HCT116 (cell line): ENCODE measurements at regions of chr6 and their contacts with region 1.

Region 1: DNA sequence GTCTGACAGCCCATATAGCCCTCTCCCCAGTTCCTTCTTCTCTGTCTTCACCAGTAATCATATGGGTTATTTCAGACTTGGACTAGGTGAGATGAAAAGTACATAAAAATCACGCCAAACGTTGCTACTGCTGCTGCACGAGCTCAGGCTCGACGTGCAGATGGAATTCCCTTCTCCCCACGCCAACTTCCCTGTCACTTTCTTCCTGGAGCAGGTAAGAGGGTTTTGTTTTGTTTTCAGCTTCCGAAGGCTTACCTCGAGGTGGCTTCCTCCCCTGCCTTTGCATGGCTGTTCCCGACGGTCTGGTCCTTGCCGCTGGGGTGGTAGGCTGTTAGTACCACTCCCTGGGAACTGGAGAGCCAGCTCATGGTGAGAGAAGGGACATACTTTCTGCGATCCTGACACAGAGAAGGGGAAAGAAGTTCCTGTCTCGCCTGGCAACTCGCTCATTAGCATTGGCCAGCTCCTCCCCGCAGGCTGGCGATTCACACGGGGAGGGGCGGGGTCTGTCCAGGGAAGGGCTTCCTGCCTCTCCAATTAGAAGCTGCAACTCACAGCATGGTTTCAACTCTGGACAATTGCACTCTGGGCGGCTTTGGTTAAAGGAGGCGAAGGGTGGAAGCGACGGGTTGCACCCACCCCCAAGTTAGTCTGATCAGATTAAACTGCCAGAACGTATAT is at the start of gene ARHGAP18:
- DNase-seq: peak; percentile 86
- ATAC-seq: peak; percentile 97
- H3K4me3 ChIP-seq: peak within 1 kb of the TSS; percentile 88 to 89
- H3K27ac ChIP-seq: peak within 1 kb of the TSS; percentile 62
- H3K4me1 ChIP-seq: peaks cover 40% of the 10 kb centered on the region in 2 experiments
- H3K27me3 ChIP-seq: no peaks in the 10 kb centered on the region
- CTCF ChIP-seq: no peak
- POLR2A ChIP-seq: no peak
- RAD21 ChIP-seq: no peak
- total RNA-seq, gene ARHGAP18: 70.3 TPM

Region 2: DNA sequence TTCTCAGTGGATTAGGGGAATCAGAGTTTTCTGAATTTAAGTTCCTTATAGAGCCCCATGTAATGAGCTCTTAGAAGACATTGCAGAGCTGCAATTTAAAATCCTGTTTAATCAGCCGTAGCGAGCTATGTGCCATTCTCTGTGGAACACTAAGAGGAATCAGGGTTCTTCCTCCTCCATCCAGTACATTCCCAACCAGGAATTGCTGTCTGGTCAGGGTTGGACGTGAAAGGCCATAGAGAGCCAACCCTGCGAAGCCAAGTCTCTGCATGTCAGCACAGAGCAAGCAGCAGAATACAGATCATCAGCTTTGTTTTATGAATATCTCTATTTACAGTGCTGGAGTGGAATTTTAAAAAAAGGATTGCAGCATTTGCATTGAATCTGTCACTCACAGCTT is 461.0 kb before region 1 on chr6:
- CTCF ChIA-PET with region 1: no interaction called
- POLR2A ChIA-PET with region 1: no interaction called
- RAD21 ChIA-PET with region 1: no interaction called
- intact Hi-C with region 1: no loop called
- DNase-seq: no peak
- ATAC-seq: no peak
- H3K4me3 ChIP-seq: no peak overlapping the region
- H3K27ac ChIP-seq: no peak overlapping the region
- H3K4me1 ChIP-seq: peaks cover 3 to 10% of the 10 kb centered on the region in 2 experiments; a peak in 3 of 4 replicates
- H3K27me3 ChIP-seq: no peaks in the 10 kb centered on the region
- CTCF ChIP-seq: no peak
- POLR2A ChIP-seq: no peak
- RAD21 ChIP-seq: no peak

Region 3: DNA sequence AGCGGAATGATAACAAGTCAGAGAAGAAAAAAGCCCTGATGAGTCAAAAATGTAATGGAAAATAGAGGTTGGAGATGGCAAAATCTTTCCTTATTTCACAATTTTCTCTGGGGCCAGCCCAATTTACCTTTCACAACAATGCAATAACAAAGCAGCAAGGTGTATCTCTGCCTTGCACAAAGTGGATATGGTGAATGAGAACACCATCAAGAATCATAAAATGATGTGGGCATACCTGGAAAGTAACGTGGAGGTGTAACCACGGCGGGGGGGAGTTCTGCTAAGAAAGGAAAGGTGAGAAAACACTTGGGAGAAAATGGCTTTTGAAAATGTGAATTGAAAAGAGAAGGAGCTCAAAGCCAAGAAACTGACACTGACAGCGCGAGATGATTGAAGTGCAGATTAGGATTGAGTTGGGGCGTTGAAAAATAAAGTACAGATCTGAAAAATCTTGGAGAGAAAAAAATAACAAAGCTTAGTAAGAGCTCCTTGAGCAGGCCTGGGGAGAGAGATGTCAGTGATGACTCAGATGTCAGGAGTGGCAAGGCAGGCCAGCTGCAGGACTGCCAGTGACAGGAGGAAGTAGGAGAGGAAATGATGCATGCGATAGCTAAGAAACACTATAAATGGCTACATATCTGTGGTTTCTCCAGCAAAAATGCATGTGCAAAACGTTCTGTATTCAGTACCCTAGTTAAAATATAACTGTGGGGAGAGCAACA is 26.1 kb before region 1 on chr6:
- CTCF ChIA-PET with region 1: no interaction called
- POLR2A ChIA-PET with region 1: interaction called, 10 read pairs
- RAD21 ChIA-PET with region 1: no interaction called
- intact Hi-C with region 1: no loop called
- DNase-seq: peak; percentile 87
- ATAC-seq: peak; percentile 78
- H3K4me3 ChIP-seq: peak overlapping the region in 1 of 2 experiments; percentile 35; a peak in 2 of 4 replicates
- H3K27ac ChIP-seq: peak overlapping the region; percentile 97
- H3K4me1 ChIP-seq: peaks cover 99 to 100% of the 10 kb centered on the region in 2 experiments
- H3K27me3 ChIP-seq: no peaks in the 10 kb centered on the region
- CTCF ChIP-seq: no peak
- POLR2A ChIP-seq: no peak
- RAD21 ChIP-seq: no peak

Region 4: GRCh38 chr6:129730477-129731165 is 20.7 kb after region 1 on chr6:
- CTCF ChIA-PET with region 1: interaction called, 6 read pairs
- POLR2A ChIA-PET with region 1: interaction called, 12 read pairs
- RAD21 ChIA-PET with region 1: no interaction called
- intact Hi-C with region 1: no loop called
- DNase-seq: no peak
- ATAC-seq: peak; percentile 62
- H3K4me3 ChIP-seq: no peak overlapping the region
- H3K27ac ChIP-seq: peak overlapping the region; percentile 52
- H3K4me1 ChIP-seq: peaks cover 27 to 38% of the 10 kb centered on the region in 2 experiments
- H3K27me3 ChIP-seq: no peaks in the 10 kb centered on the region
- CTCF ChIP-seq: peak; percentile 60 to 85 (median 71)
- POLR2A ChIP-seq: no peak
- RAD21 ChIP-seq: peak; percentile 96

Region 5: GRCh38 chr6:130098317-130098716 is 388.4 kb after region 1 on chr6:
- CTCF ChIA-PET with region 1: no interaction called
- POLR2A ChIA-PET with region 1: no interaction called
- RAD21 ChIA-PET with region 1: no interaction called
- intact Hi-C with region 1: no loop called
- DNase-seq: no peak
- ATAC-seq: no peak
- H3K4me3 ChIP-seq: no peak overlapping the region
- H3K27ac ChIP-seq: no peak overlapping the region
- H3K4me1 ChIP-seq: no peaks in the 10 kb centered on the region
- H3K27me3 ChIP-seq: no peaks in the 10 kb centered on the region
- CTCF ChIP-seq: no peak
- POLR2A ChIP-seq: no peak
- RAD21 ChIP-seq: no peak